ENCODE measurements at regions of chr6 and their contacts with region 1.

Region 1: DNA sequence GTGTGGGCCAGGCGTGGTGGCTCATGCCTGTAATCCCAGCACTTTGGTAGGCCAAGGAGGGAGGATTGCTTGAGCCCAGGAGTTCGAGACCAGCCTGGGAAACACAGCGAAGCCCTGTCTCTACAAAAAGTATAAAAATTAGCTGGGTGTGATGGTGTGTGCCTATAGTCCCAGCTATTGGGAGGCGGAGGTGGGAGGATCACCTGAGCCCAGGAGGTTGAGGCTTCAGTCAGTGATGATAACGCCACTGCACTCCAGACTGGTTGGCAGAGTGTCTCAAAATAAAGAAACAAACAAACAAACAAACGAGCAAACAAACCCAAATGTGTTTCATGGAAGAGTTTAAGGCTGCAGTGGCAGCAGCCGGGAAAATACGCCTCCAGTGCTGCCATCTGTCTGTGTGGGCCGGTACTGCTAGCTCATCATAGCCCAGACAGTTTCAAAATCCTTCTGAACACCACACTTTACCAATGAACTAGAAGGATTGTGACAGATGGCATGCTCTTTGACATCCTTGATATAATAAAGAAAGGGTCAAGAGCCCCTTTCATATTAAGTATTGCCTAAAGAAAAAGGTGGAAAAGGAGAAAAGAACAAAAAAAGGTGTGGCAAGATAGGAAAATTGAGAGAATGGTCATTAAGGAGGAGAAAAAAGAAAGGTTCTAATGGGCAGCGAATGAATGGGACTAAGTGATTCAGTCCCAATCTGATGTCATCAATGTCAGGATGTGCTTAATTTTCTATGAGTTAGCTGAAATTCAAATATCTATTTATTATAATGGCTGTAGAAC is 298.6 kb downstream of the SYNE1 start:
- DNase-seq: peak; percentile 59
- H3K4me3 ChIP-seq: no peak overlapping the region; a peak in 1 of 4 replicates
- H3K27ac ChIP-seq: no peak overlapping the region
- H3K4me1 ChIP-seq: no peaks in the 10 kb centered on the region
- H3K27me3 ChIP-seq: no peaks in the 10 kb centered on the region
- CTCF ChIP-seq: peak; percentile 76
- EP300 ChIP-seq: no peak
- RAD21 ChIP-seq: peak; percentile 65

Region 2: GRCh38 chr6:150560004-150560883 is 1778.3 kb before region 1 on chr6:
- CTCF ChIA-PET with region 1: no interaction called
- POLR2A ChIA-PET with region 1: no interaction called
- DNase-seq: no peak
- H3K4me3 ChIP-seq: no peak overlapping the region
- H3K27ac ChIP-seq: no peak overlapping the region
- H3K4me1 ChIP-seq: no peaks in the 10 kb centered on the region
- H3K27me3 ChIP-seq: no peaks in the 10 kb centered on the region
- CTCF ChIP-seq: no peak
- EP300 ChIP-seq: no peak
- RAD21 ChIP-seq: no peak

Region 3: GRCh38 chr6:152295346-152295745 is 43.2 kb before region 1 on chr6:
- CTCF ChIA-PET with region 1: interaction called, 12 read pairs
- POLR2A ChIA-PET with region 1: no interaction called
- DNase-seq: no peak
- H3K4me3 ChIP-seq: no peak overlapping the region
- H3K27ac ChIP-seq: no peak overlapping the region
- H3K4me1 ChIP-seq: peaks cover 0 to 10% of the 10 kb centered on the region in 2 experiments; a peak in 2 of 4 replicates
- H3K27me3 ChIP-seq: no peaks in the 10 kb centered on the region
- CTCF ChIP-seq: no peak
- EP300 ChIP-seq: no peak
- RAD21 ChIP-seq: no peak

Region 4: DNA sequence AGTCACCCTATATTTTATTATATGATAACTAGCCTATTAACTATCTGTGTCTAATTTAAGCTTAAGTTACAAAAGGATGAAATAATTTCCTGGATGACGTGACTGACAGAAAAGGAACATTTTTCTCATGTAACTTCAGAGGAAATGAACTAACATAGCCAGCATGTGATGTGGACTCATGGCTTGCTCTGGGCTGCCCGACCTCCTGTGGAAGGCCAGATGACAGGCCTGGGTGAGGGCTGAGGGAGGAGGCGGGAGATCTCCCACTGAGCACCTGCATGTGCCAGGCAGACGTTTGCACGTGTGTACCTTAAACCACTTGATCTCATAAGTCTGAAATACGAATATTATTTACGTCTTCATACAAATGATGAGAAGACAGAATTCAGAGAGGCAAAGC is 22.5 kb before region 1 on chr6:
- CTCF ChIA-PET with region 1: interaction called, 21 read pairs
- POLR2A ChIA-PET with region 1: no interaction called
- DNase-seq: no peak
- H3K4me3 ChIP-seq: no peak overlapping the region
- H3K27ac ChIP-seq: peak overlapping the region in 1 of 2 experiments; percentile 95; a peak in 3 of 4 replicates
- H3K4me1 ChIP-seq: peaks cover 0 to 19% of the 10 kb centered on the region in 2 experiments; a peak in 1 of 4 replicates
- H3K27me3 ChIP-seq: no peaks in the 10 kb centered on the region
- CTCF ChIP-seq: no peak
- EP300 ChIP-seq: no peak
- RAD21 ChIP-seq: no peak

Region 5: DNA sequence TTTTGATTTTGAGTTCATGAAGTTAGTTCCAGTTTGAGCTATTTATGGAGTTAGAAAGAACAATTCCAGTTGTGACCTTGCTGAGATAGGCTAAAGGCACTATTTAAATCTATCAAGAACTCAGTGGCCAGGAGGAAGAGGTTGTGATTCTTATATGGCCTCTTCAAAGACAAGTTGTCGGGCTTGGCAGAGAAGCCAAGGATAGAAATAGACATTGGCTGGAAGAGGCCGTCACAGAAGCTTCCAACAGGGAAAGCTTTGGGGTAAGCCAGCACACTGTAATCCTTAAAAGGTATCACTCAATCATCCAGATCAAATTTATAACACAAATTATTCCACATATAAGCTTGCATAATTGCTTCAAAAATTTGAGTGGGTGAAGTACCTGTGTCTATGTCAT is 12.6 kb after region 1 on chr6:
- CTCF ChIA-PET with region 1: interaction called, 16 read pairs
- POLR2A ChIA-PET with region 1: interaction called, 3 read pairs
- DNase-seq: no peak
- H3K4me3 ChIP-seq: no peak overlapping the region
- H3K27ac ChIP-seq: no peak overlapping the region
- H3K4me1 ChIP-seq: no peaks in the 10 kb centered on the region
- H3K27me3 ChIP-seq: no peaks in the 10 kb centered on the region
- CTCF ChIP-seq: no peak
- EP300 ChIP-seq: no peak
- RAD21 ChIP-seq: no peak